CD8-positive, alpha-beta T cell (primary cell): ENCODE measurements at regions of chr16 and their contacts with region 1.

Region 1: DNA sequence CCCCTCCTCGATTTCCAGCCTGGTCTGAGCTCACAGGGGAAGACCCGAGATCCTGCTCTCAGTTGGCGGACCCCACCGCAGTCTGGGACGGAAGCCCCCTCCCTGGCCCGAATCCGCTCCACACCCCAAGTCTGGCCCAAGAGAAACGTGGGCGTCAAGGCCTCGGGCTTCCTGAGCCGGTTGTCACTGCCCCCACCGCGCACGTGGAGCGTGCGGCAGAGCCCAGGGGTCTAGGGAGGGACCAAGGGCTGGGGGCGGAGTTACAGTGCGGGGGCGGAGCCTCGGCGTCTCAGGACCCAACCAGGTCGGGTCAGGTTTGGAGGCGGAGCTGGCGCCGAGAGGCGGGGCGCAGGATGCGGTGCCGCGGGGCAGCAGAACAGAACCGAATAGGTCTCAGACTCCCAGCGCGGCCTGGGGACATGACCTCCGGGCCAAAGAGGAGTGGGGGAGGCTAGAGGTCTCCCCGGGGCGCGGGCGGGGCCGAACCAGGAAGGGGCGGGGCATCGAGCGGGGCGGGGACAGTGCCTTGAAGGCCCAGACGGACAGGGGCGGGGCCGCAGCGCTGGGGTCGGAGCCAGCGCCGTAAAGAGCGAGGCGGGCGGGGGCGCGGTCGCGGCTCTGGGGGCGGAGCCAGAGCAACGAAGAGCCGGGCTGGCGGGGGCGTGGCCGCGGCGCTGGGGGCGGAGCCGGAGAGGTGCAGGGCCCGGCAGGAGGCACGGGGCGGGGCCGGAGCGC is 431 bp upstream of the ZFPM1 start:
- DNase-seq: peak; percentile 97 to 100 (median 99)
- ATAC-seq: peak; percentile 72
- H3K4me3 ChIP-seq: peak overlapping the region; percentile 52 to 59
- H3K4me3 Mint-ChIP-seq: peak overlapping the region; percentile 85
- H3K27ac ChIP-seq: peak overlapping the region; percentile 55 to 80
- H3K27ac Mint-ChIP-seq: peak overlapping the region; percentile 88
- H3K4me1 ChIP-seq: peaks cover 33% of the 10 kb centered on the region
- H3K4me1 Mint-ChIP-seq: peaks cover 32% of the 10 kb centered on the region
- H3K27me3 ChIP-seq: no peaks in the 10 kb centered on the region
- H3K27me3 Mint-ChIP-seq: no peaks in the 10 kb centered on the region
- CTCF ChIP-seq: no peak

Region 2: DNA sequence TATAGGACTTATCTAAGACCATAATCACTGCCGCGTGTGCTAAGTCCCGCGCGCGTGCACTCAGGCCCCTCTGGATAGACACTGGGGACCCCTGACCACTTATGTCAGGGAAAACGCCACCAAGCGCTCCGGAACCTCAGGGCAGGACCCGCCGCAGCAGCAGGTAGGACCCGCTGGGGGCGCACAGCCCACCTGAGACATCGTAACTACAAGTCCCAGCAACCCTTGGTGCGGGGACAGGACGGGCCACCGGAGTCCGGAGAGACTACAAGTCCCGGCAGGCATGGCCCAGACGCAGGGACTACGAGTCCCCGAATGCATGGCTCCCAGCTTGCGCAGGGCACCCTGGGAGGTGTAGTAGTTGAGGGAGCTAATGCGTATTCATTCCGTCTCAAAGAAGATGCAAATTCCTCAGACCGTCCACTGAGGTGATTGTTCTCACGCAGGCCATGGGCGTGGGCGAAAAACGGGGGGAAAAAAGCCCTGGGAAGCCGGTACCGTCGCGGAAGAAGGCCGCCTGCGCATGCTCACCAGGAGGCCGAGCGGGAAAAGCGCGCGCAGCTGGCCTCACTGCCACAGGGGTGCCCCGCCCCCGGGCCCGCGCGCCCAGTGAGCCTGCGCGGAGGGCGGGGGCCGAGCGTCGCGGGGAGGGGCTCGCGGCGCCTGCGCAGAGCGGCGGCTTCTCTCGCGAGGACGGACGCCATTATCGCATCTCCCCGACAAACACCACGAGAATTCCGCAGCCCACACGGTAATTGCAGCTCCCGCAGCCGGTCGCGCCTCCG is 501.7 kb before region 1 on chr16 and contains the start of gene BANP:
- CTCF ChIA-PET with region 1: no interaction called
- POLR2A ChIA-PET with region 1: no interaction called
- intact Hi-C with region 1: loop called in 1 of 2 experiments (anchors 2 kb)
- DNase-seq: peak; percentile 92 to 100 (median 96)
- ATAC-seq: peak; percentile 93
- H3K4me3 ChIP-seq: peak within 1 kb of the TSS; percentile 72 to 98
- H3K4me3 Mint-ChIP-seq: peak within 1 kb of the TSS; percentile 97
- H3K27ac ChIP-seq: peak within 1 kb of the TSS; percentile 88 to 96
- H3K27ac Mint-ChIP-seq: peak within 1 kb of the TSS; percentile 99
- H3K4me1 ChIP-seq: peaks cover 37% of the 10 kb centered on the region
- H3K4me1 Mint-ChIP-seq: peaks cover 42% of the 10 kb centered on the region
- H3K27me3 ChIP-seq: no peaks in the 10 kb centered on the region
- H3K27me3 Mint-ChIP-seq: no peaks in the 10 kb centered on the region
- CTCF ChIP-seq: peak; percentile 41
- total RNA-seq, gene BANP: 55.3 to 60.6 TPM

Region 3: GRCh38 chr16:88383401-88384221 is 69.0 kb before region 1 on chr16:
- CTCF ChIA-PET with region 1: no interaction called
- POLR2A ChIA-PET with region 1: no interaction called
- intact Hi-C with region 1: no loop called
- DNase-seq: no peak
- ATAC-seq: no peak
- H3K4me3 ChIP-seq: no peak overlapping the region
- H3K4me3 Mint-ChIP-seq: no peak overlapping the region
- H3K27ac ChIP-seq: no peak overlapping the region
- H3K27ac Mint-ChIP-seq: no peak overlapping the region
- H3K4me1 ChIP-seq: peaks cover 5% of the 10 kb centered on the region
- H3K4me1 Mint-ChIP-seq: peaks cover 9% of the 10 kb centered on the region
- H3K27me3 ChIP-seq: peaks cover 7 to 10% of the 10 kb centered on the region in 2 experiments
- H3K27me3 Mint-ChIP-seq: peaks cover 33% of the 10 kb centered on the region
- CTCF ChIP-seq: no peak

Region 4: GRCh38 chr16:88505405-88506082 is 52.9 kb after region 1 on chr16:
- CTCF ChIA-PET with region 1: no interaction called
- POLR2A ChIA-PET with region 1: no interaction called
- intact Hi-C with region 1: loop called in 1 of 2 experiments (anchors 2 kb)
- DNase-seq: peak; percentile 48 to 87 (median 73)
- ATAC-seq: peak; percentile 81
- H3K4me3 ChIP-seq: no peak overlapping the region
- H3K4me3 Mint-ChIP-seq: no peak overlapping the region
- H3K27ac ChIP-seq: no peak overlapping the region
- H3K27ac Mint-ChIP-seq: no peak overlapping the region
- H3K4me1 ChIP-seq: peaks cover 14% of the 10 kb centered on the region
- H3K4me1 Mint-ChIP-seq: peaks cover 14% of the 10 kb centered on the region
- H3K27me3 ChIP-seq: no peaks in the 10 kb centered on the region
- H3K27me3 Mint-ChIP-seq: no peaks in the 10 kb centered on the region
- CTCF ChIP-seq: peak; percentile 35

Region 5: DNA sequence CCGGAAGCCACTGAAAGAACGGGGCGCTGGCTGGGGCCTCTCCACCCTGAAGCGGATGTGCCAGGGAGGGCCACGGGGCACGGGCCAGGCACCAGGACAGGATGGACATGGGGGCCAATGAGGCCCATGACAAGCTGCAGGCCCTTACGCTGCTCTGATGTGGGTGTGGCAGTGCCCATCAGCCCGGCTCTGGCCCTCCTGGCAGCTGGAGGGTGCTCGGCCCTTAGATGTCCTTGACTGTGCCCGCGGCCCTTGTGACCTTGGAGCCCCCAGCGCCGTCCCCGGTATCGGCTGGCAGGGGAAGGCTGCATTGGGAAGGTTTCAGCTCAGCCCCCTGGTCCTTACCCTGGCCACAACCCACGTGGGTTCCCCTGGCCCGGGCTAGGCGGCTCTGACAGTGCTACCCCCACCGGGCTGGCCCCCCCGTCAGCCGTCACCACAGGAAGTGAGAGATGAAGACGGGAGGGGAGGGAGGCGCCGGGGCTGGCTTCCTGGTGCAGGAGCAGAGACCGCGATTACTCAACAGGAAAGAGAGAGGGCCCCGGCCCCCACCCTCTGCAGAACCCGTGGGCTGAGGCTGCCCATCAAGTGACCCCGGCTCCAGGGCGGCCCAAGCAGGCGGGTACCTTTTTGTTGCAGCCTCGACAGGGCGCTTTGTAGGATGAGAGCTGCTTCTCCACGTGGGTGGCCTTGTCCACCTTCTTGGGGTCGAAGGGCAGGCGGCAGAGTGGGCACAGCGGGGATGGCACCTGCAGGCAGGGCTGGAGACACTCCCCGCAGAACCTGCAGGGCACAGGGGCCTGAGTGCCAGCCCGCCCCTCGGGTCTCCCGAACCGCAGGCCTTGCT is 248.2 kb after region 1 on chr16:
- CTCF ChIA-PET with region 1: no interaction called
- POLR2A ChIA-PET with region 1: no interaction called
- intact Hi-C with region 1: loop called (anchors 2 to 5 kb)
- DNase-seq: peak; percentile 92 to 98 (median 97)
- ATAC-seq: peak; percentile 65
- H3K4me3 ChIP-seq: peak overlapping the region; percentile 74 to 95
- H3K4me3 Mint-ChIP-seq: peak overlapping the region; percentile 90
- H3K27ac ChIP-seq: peak overlapping the region; percentile 83 to 91
- H3K27ac Mint-ChIP-seq: peak overlapping the region; percentile 98
- H3K4me1 ChIP-seq: peaks cover 56% of the 10 kb centered on the region
- H3K4me1 Mint-ChIP-seq: peaks cover 61% of the 10 kb centered on the region
- H3K27me3 ChIP-seq: no peaks in the 10 kb centered on the region
- H3K27me3 Mint-ChIP-seq: no peaks in the 10 kb centered on the region
- CTCF ChIP-seq: no peak

Region 6: GRCh38 chr16:88803264-88803987 is 350.8 kb after region 1 on chr16 and contains the start of gene CDT1:
- CTCF ChIA-PET with region 1: no interaction called
- POLR2A ChIA-PET with region 1: no interaction called
- intact Hi-C with region 1: loop called in 1 of 2 experiments (anchors 10 kb)
- DNase-seq: peak; percentile 70 to 94 (median 85)
- ATAC-seq: peak; percentile 68
- H3K4me3 ChIP-seq: peak within 1 kb of the TSS; percentile 59 to 65
- H3K4me3 Mint-ChIP-seq: peak within 1 kb of the TSS; percentile 84
- H3K27ac ChIP-seq: peak within 1 kb of the TSS; percentile 44 to 59
- H3K27ac Mint-ChIP-seq: peak within 1 kb of the TSS; percentile 72
- H3K4me1 ChIP-seq: peaks cover 26% of the 10 kb centered on the region
- H3K4me1 Mint-ChIP-seq: peaks cover 20% of the 10 kb centered on the region
- H3K27me3 ChIP-seq: no peaks in the 10 kb centered on the region
- H3K27me3 Mint-ChIP-seq: no peaks in the 10 kb centered on the region
- CTCF ChIP-seq: no peak
- total RNA-seq, gene CDT1: 1.2 to 2.3 TPM

Region 7: DNA sequence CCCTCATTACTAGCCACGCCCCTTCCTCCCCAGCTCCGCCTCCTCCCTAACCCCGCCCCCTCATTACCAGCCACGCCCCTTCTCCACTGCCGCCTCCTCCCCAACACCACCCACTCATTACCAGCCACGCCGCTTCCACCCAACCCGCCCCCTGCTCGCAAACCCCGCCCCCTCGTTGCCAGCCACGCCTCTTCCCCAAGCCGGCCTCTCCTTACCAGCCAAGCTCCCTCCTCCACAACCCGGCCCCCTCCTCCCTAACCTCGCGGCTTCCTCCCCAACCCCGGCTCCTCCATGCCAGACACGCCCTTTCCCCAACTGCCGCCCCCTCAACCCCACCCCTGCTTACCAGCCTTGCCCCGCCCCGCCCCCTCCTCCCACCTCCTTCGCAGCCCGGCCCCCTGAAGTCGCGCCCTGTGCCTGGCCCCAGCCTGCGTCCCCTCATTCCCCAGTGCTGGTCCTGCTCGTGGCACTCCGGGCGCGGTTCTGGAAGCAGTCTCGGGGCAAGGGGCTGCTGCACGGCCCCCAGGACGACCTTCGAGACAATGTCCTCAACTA is 740.4 kb after region 1 on chr16:
- CTCF ChIA-PET with region 1: no interaction called
- POLR2A ChIA-PET with region 1: no interaction called
- intact Hi-C with region 1: loop called in 1 of 2 experiments (anchors 2 kb)
- DNase-seq: peak in 3 of 9 experiments; percentile 62 to 76 (median 64)
- ATAC-seq: no peak
- H3K4me3 ChIP-seq: no peak overlapping the region
- H3K4me3 Mint-ChIP-seq: no peak overlapping the region
- H3K27ac ChIP-seq: no peak overlapping the region
- H3K27ac Mint-ChIP-seq: no peak overlapping the region
- H3K4me1 ChIP-seq: no peaks in the 10 kb centered on the region
- H3K4me1 Mint-ChIP-seq: peaks cover 4% of the 10 kb centered on the region
- H3K27me3 ChIP-seq: no peaks in the 10 kb centered on the region
- H3K27me3 Mint-ChIP-seq: no peaks in the 10 kb centered on the region
- CTCF ChIP-seq: no peak